ENCODE measurements at regions of chr3 and their contacts with region 1.

Region 1: DNA sequence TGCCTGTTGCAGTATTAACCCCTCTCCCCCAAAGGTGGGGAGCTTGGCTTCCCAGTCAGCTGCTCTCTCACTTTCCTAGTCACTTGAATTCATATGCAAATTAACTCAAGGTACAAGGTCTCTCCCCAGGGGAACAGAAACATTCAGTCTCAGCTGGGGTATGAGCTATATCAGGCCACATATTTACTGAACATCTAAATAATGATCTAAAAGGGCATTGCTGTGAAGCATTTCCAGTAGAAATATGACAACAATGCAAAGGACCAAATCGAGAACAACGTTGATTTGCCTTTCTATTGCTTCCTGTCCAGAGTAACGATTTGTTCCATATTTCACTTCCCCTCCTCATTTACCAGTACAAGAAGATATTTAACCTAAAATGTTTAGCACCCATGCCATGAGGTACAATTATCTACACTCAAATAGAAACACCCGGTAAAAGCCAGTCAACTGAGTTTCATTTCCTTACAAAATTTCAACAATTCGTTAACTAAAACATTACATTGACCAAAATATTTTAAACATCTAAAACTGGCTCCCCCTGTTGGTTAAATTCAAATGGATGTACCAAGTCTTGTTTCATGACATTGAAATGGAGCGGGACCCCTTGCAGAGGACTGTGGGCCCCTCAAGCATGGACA is 36.5 kb upstream of the KLHL6 start:
- DNase-seq: no peak
- H3K4me3 ChIP-seq: peak overlapping the region in 1 of 4 experiments; percentile 17; a peak in 1 of 8 replicates
- H3K27ac ChIP-seq: no peak overlapping the region
- H3K4me1 ChIP-seq: peaks cover 0 to 10% (median 5%) of the 10 kb centered on the region in 4 experiments; a peak in 4 of 7 replicates
- H3K27me3 ChIP-seq: no peaks in the 10 kb centered on the region; a peak in 1 of 7 replicates
- CTCF ChIP-seq: peak in 1 of 3 experiments; percentile 6; a peak in 1 of 4 replicates
- EP300 ChIP-seq: no peak
- POLR2A ChIP-seq: no peak
- RAD21 ChIP-seq: no peak

Region 2: GRCh38 chr3:183394156-183394555 is 197.8 kb before region 1 on chr3:
- CTCF ChIA-PET with region 1: no interaction called
- POLR2A ChIA-PET with region 1: no interaction called
- DNase-seq: no peak
- H3K4me3 ChIP-seq: no peak overlapping the region
- H3K27ac ChIP-seq: no peak overlapping the region
- H3K4me1 ChIP-seq: peaks cover 0 to 3% (median 3%) of the 10 kb centered on the region in 4 experiments; a peak in 3 of 7 replicates
- H3K27me3 ChIP-seq: no peaks in the 10 kb centered on the region
- CTCF ChIP-seq: no peak
- EP300 ChIP-seq: no peak
- POLR2A ChIP-seq: no peak
- RAD21 ChIP-seq: no peak

Region 3: GRCh38 chr3:183576487-183577107 is 15.4 kb before region 1 on chr3:
- CTCF ChIA-PET with region 1: interaction called, 17 read pairs
- POLR2A ChIA-PET with region 1: no interaction called
- DNase-seq: no peak
- H3K4me3 ChIP-seq: no peak overlapping the region
- H3K27ac ChIP-seq: no peak overlapping the region
- H3K4me1 ChIP-seq: peaks cover 2 to 10% (median 5%) of the 10 kb centered on the region in 4 experiments; a peak in 4 of 7 replicates
- H3K27me3 ChIP-seq: no peaks in the 10 kb centered on the region
- CTCF ChIP-seq: no peak
- EP300 ChIP-seq: no peak
- POLR2A ChIP-seq: no peak
- RAD21 ChIP-seq: no peak